ENCODE measurements at regions of chr7 and their contacts with region 1.

Region 1: GRCh38 chr7:23615331-23615730 is 18.1 kb downstream of the CCDC126 start:
- DNase-seq: no peak
- H3K4me3 Mint-ChIP-seq: no peak overlapping the region
- H3K27ac Mint-ChIP-seq: no peak overlapping the region
- H3K4me1 Mint-ChIP-seq: no peaks in the 10 kb centered on the region
- H3K27me3 Mint-ChIP-seq: no peaks in the 10 kb centered on the region
- CTCF ChIP-seq: no peak

Region 2: GRCh38 chr7:23597094-23598091 is 17.9 kb before region 1 on chr7 and contains the start of gene CCDC126:
- CTCF ChIA-PET with region 1: no interaction called
- POLR2A ChIA-PET with region 1: interaction called, 10 read pairs
- intact Hi-C with region 1: no loop called
- DNase-seq: peak; percentile 91
- H3K4me3 Mint-ChIP-seq: peak within 1 kb of the TSS; percentile 88
- H3K27ac Mint-ChIP-seq: peak within 1 kb of the TSS; percentile 87
- H3K4me1 Mint-ChIP-seq: peaks cover 27% of the 10 kb centered on the region
- H3K27me3 Mint-ChIP-seq: no peaks in the 10 kb centered on the region
- CTCF ChIP-seq: no peak
- total RNA-seq, gene CCDC126: 4.2 and 4.7 TPM in 2 replicates

Measured in MCF 10A (cell line).